ENCODE measurements at regions of chr1 and their contacts with region 1.

Region 1: DNA sequence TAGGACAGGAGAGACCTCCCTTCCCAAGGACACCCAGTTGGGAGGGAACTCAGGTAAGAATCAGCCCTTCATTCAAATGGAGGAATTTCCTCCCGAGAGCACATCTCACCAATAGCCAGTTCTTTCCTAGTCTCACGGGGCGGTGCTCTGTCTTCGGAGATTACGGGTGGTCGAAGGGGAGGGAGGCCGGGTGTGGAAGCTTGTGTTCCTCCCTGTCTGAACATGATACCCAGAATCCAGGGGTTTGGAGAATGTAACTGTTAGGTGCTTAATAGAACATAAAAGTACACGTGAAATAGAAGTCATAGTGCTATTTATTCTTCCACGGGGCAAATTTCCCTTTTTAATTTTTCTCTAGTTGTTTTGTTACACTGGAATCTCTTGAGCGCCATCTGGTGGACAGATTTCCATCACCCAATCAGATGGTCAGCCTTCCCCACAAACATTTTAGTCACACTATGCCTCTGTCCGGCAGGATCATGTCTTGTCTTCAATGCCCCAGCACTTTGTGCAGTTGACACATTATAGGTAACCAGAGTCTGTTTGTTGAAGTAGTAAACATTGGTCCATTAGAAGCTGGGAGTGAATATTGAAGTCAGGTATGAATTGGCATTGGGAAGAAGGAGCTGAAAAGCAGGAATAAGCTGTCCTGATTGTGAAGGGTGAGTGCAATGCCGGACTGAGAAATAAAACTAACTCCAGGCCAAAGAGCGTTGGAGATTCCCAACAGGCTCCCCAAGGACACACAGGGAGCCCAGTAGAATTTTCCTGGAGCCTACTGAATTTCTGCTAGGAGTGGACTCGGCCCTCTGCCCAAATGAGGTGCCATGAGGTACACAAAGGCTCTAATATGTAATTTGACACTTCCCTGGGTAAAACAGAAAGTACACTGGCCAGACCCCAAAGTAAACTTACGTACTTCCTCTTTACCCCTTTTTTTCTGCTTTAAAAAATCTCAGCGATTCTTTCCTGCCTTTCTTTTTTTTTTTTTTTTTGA is 27.6 kb upstream of the ZNF697 start:
- DNase-seq: peak; percentile 42
- ATAC-seq: peak; percentile 94
- H3K4me3 ChIP-seq: no peak overlapping the region; the same call in 1 of the 2 replicates
- H3K27ac ChIP-seq: no peak overlapping the region
- H3K4me1 ChIP-seq: no peaks in the 10 kb centered on the region
- H3K27me3 ChIP-seq: no peaks in the 10 kb centered on the region; a peak in 1 of 4 replicates
- CTCF ChIP-seq: peak; percentile 63 to 80 (median 78)
- EP300 ChIP-seq: no peak
- POLR2A ChIP-seq: no peak
- RAD21 ChIP-seq: peak; percentile 76

Region 2: DNA sequence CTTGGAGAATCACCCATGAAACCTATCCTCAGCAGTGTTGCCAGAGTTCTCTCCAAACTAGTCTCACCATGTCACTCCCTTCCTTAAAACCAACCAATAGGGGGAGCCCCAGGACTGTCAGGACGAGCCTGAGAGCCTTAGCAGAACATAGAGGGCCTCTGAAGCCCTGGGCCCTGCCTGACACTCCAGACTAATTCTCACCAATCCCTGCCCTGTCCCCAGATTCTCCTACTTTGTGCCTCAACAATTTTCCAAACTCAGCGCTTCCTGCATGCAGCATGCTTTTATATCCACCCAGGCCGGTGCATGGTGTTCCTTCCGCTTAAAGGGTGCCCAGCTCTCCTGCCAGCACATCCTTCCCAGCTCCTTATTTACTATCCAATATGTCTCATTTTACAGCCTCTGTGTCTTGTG is 125.9 kb before region 1 on chr1:
- CTCF ChIA-PET with region 1: interaction called, 7 read pairs
- POLR2A ChIA-PET with region 1: no interaction called
- RAD21 ChIA-PET with region 1: no interaction called
- SMC1A ChIA-PET with region 1: no interaction called
- in situ Hi-C with region 1: no loop called
- intact Hi-C with region 1: loop called (anchors 1 kb)
- DNase-seq: no peak
- ATAC-seq: peak; percentile 96
- H3K4me3 ChIP-seq: no peak overlapping the region
- H3K27ac ChIP-seq: no peak overlapping the region
- H3K4me1 ChIP-seq: no peaks in the 10 kb centered on the region
- H3K27me3 ChIP-seq: no peaks in the 10 kb centered on the region; a peak in 2 of 4 replicates
- CTCF ChIP-seq: peak; percentile 48 to 70 (median 61)
- EP300 ChIP-seq: no peak
- POLR2A ChIP-seq: no peak
- RAD21 ChIP-seq: peak; percentile 69

Region 3: DNA sequence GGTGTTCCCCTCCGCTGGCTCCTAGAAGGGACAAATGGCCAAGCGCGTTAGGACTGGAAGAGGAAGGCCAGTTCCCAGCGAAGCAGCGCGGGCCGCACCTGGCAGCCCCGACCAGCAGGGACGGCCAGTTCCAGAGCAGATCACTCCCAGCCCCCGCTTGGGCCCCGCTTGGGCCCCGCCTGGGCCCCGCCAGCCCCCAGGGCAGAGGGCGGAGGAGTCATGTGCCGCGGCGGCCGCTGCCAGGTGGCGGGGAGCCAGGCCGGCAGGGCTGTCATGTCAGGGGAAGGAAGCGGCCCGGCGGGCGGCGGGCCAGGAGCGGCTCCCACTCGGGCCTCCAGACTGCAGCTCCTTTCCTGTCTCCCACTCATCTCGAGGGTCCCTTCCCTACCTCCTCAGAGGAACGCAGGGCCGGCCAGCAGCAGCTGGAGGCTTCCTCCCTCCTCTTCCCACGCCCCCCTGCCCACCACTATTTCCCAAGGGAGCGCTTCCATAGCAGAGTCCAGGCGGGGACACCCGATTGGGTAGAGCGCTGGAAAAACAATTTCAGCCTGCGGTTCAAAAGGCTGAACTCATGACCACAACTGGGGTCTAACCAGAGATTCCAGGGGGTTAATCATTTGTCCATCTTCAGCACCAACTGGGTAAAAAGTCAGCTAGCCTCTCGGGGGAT is 44.1 kb before region 1 on chr1:
- CTCF ChIA-PET with region 1: interaction called, 17 read pairs
- POLR2A ChIA-PET with region 1: no interaction called
- RAD21 ChIA-PET with region 1: interaction called, 6 read pairs
- SMC1A ChIA-PET with region 1: interaction called, 16 read pairs
- in situ Hi-C with region 1: no loop called
- intact Hi-C with region 1: no loop called
- DNase-seq: no peak
- ATAC-seq: no peak; the same call in none of the 3 replicates
- H3K4me3 ChIP-seq: no peak overlapping the region
- H3K27ac ChIP-seq: no peak overlapping the region
- H3K4me1 ChIP-seq: peaks cover 18% of the 10 kb centered on the region
- H3K27me3 ChIP-seq: no peaks in the 10 kb centered on the region
- CTCF ChIP-seq: no peak
- EP300 ChIP-seq: no peak
- POLR2A ChIP-seq: no peak
- RAD21 ChIP-seq: no peak

Region 4: GRCh38 chr1:119656410-119656955 is 19.2 kb before region 1 on chr1:
- CTCF ChIA-PET with region 1: interaction called, 188 read pairs
- POLR2A ChIA-PET with region 1: no interaction called
- RAD21 ChIA-PET with region 1: interaction called, 41 read pairs
- SMC1A ChIA-PET with region 1: interaction called, 53 read pairs
- in situ Hi-C with region 1: no loop called
- intact Hi-C with region 1: no loop called
- DNase-seq: no peak
- ATAC-seq: peak; percentile 61
- H3K4me3 ChIP-seq: no peak overlapping the region
- H3K27ac ChIP-seq: no peak overlapping the region
- H3K4me1 ChIP-seq: peaks cover 18% of the 10 kb centered on the region
- H3K27me3 ChIP-seq: no peaks in the 10 kb centered on the region
- CTCF ChIP-seq: no peak
- EP300 ChIP-seq: no peak
- POLR2A ChIP-seq: no peak
- RAD21 ChIP-seq: no peak

Region 5: DNA sequence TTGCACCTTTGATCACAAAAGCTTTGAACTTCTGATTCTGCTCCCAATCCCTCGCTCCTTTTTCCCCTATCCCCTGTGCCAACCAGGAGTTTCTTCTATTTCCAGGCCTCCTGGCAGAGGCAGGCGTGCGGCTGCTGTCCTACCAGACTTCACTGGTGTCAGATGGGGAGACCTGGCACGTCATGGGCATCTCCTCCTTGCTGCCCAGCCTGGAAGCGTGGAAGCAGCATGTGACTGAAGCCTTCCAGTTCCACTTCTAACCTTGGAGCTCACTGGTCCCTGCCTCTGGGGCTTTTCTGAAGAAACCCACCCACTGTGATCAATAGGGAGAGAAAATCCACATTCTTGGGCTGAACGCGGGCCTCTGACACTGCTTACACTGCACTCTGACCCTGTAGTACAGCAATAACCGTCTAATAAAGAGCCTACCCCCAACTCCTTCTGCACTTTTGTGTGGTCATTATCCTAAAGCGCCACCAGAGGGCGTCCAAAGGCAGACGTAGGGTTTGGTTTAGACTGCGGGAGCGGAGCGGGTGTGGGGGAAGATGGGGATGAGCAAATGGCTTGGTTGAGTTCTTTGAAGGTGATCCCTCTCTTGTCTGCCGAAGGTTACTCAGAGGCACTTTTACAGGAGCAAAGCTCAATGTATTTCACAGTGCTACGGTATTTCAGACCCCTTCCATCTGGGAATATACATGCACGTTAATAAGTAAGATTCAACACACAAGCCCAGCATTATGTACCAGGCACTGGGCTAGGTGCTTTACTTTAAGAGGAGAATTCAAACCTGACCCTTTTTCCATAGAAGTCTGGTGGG is 68.3 kb after region 1 on chr1:
- CTCF ChIA-PET with region 1: interaction called, 5 read pairs
- POLR2A ChIA-PET with region 1: no interaction called
- RAD21 ChIA-PET with region 1: no interaction called
- SMC1A ChIA-PET with region 1: no interaction called
- in situ Hi-C with region 1: no loop called
- intact Hi-C with region 1: loop called (anchors 5 kb)
- DNase-seq: peak; percentile 3
- ATAC-seq: peak; percentile 92
- H3K4me3 ChIP-seq: no peak overlapping the region
- H3K27ac ChIP-seq: no peak overlapping the region
- H3K4me1 ChIP-seq: no peaks in the 10 kb centered on the region
- H3K27me3 ChIP-seq: no peaks in the 10 kb centered on the region; a peak in 1 of 4 replicates
- CTCF ChIP-seq: peak; percentile 77 to 95 (median 83)
- EP300 ChIP-seq: no peak
- POLR2A ChIP-seq: no peak
- RAD21 ChIP-seq: peak; percentile 74